ENCODE measurements at regions of chr5 and their contacts with region 1.

Region 1: GRCh38 chr5:69369369-69370121 is at the starts of genes AK6, RAD17 and TAF9:
- DNase-seq: peak; percentile 92
- H3K4me3 ChIP-seq: peak within 1 kb of the TSS; percentile 89 to 100 (median 99)
- H3K27ac ChIP-seq: peak within 1 kb of the TSS; percentile 91
- H3K4me1 ChIP-seq: peaks cover 4% of the 10 kb centered on the region
- H3K27me3 ChIP-seq: no peaks in the 10 kb centered on the region
- CTCF ChIP-seq: no peak
- total RNA-seq, gene AK6: 14.0 to 38.5 TPM
- total RNA-seq, gene RAD17: 21.5 to 23.3 TPM
- total RNA-seq, gene TAF9: 84.0 to 105 TPM

Region 2: DNA sequence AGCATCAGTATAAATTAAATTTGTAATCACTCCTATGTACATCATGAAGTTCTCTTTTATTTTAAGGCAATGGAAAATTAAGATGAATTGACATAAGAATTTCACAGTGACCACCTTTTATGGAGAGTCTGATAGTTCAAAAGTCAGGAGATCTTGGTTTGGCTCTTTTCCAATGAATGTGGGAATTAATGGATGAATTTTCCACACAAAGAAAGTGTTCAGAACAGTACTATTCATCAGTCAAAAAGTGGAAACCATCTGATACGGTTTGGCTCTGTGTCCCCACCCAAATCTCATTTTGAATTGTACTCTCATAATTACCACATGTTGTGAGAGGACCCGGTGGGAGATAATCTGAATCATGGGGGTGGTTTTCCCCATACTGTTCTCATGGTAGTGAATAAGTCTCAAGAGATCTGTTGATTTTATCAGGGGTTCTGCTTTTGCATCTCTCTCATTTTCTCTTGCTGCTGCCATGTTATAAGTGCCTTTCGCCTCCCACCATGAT is 61.4 kb before region 1 on chr5:
- CTCF ChIA-PET with region 1: no interaction called
- dilution Hi-C with region 1: no loop called
- in situ Hi-C with region 1: no loop called
- intact Hi-C with region 1: no loop called
- DNase-seq: no peak
- H3K4me3 ChIP-seq: no peak overlapping the region
- H3K27ac ChIP-seq: no peak overlapping the region
- H3K4me1 ChIP-seq: no peaks in the 10 kb centered on the region
- H3K27me3 ChIP-seq: no peaks in the 10 kb centered on the region
- CTCF ChIP-seq: no peak

Region 3: DNA sequence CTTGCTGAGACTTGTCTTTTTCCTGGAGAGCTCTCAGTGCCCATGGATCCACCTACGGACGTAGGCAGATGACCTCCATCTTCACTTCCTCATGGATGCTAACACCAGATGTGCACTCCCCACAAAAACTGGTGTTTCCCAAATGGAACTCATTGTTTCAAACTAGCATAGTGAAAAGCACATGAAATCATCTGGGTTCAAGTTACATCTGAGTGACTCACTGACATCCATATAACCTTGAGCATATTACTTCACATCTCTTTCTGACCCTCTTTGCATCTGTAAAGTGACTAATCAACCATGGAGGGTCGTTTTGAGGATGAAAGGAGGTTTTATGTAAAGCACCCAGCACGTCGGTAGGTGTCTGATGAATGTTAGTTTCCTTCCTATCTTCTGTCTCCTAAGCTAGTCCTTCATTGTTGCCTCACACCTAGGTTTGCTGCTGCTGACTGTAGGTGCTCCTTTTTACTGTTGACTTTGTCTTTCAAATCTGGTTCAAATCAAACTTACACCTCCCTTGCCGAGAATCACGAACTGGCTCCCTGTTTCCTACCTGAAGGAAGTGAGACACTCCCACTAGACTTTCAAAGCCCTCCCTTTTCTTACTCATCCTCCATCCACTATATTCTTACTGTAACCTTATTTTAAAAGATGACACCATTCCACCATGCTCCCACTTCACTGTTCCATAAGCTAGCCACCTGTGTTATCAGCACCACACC is 133.4 kb after region 1 on chr5:
- CTCF ChIA-PET with region 1: no interaction called
- dilution Hi-C with region 1: no loop called
- in situ Hi-C with region 1: no loop called
- intact Hi-C with region 1: loop called (anchors 2 kb)
- DNase-seq: peak; percentile 88
- H3K4me3 ChIP-seq: no peak overlapping the region
- H3K27ac ChIP-seq: peak overlapping the region; percentile 89
- H3K4me1 ChIP-seq: peaks cover 18% of the 10 kb centered on the region
- H3K27me3 ChIP-seq: no peaks in the 10 kb centered on the region
- CTCF ChIP-seq: no peak